ENCODE measurements at regions of chr10 and their contacts with region 1.

Region 1: GRCh38 chr10:33087922-33088321 is 129.9 kb upstream of the ITGB1 start:
- DNase-seq: no peak
- H3K4me3 ChIP-seq: no peak overlapping the region
- H3K27ac ChIP-seq: no peak overlapping the region
- H3K4me1 ChIP-seq: no peaks in the 10 kb centered on the region
- H3K27me3 ChIP-seq: peaks cover 0 to 1% of the 10 kb centered on the region in 2 experiments
- CTCF ChIP-seq: no peak
- POLR2A ChIP-seq: no peak

Region 2: DNA sequence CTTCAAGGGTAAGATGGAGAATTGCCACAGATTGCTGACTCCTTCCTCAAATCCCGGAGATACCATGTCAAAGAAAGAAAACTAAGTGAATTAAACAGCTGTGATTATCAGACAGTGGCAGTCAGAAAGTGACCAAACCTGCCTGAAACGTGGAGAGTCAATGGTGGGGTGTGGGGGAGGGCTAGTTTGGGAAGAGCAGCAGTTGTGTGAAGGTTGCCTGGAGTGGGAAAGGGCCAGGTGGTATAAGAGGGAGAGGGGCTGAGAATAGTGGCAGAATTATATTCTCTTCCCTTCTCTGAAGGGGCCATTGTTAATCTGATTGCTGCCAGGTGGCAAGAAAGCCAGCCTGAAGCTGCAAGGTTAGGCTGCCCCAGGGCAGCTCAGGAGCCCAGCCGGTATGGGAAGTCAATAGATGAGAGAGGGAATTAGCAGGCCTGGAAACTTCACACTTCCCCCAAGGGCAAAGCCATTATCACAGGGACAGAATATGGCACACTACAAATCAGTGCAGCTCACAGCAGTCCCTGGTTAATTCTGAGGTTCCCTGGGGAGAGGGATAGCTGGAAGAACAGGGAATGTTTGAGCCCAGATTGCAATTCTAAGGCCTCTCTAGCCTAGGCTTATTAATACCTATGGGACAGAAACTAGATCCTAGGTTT is 46.0 kb before region 1 on chr10:
- CTCF ChIA-PET with region 1: no interaction called
- POLR2A ChIA-PET with region 1: no interaction called
- dilution Hi-C with region 1: no loop called
- intact Hi-C with region 1: no loop called
- DNase-seq: no peak
- H3K4me3 ChIP-seq: no peak overlapping the region
- H3K27ac ChIP-seq: no peak overlapping the region
- H3K4me1 ChIP-seq: no peaks in the 10 kb centered on the region
- H3K27me3 ChIP-seq: no peaks in the 10 kb centered on the region
- CTCF ChIP-seq: no peak
- POLR2A ChIP-seq: no peak

Region 3: GRCh38 chr10:33125522-33126517 is 37.9 kb after region 1 on chr10:
- CTCF ChIA-PET with region 1: no interaction called
- POLR2A ChIA-PET with region 1: no interaction called
- dilution Hi-C with region 1: no loop called
- intact Hi-C with region 1: loop called (anchors 1 kb)
- DNase-seq: peak; percentile 58
- H3K4me3 ChIP-seq: no peak overlapping the region
- H3K27ac ChIP-seq: peak overlapping the region; percentile 73
- H3K4me1 ChIP-seq: peaks cover 15% of the 10 kb centered on the region
- H3K27me3 ChIP-seq: no peaks in the 10 kb centered on the region
- CTCF ChIP-seq: no peak
- POLR2A ChIP-seq: no peak

Measured in endothelial cell of umbilical vein (primary cell).